ENCODE measurements at regions of chr1 and their contacts with region 1.

Region 1: DNA sequence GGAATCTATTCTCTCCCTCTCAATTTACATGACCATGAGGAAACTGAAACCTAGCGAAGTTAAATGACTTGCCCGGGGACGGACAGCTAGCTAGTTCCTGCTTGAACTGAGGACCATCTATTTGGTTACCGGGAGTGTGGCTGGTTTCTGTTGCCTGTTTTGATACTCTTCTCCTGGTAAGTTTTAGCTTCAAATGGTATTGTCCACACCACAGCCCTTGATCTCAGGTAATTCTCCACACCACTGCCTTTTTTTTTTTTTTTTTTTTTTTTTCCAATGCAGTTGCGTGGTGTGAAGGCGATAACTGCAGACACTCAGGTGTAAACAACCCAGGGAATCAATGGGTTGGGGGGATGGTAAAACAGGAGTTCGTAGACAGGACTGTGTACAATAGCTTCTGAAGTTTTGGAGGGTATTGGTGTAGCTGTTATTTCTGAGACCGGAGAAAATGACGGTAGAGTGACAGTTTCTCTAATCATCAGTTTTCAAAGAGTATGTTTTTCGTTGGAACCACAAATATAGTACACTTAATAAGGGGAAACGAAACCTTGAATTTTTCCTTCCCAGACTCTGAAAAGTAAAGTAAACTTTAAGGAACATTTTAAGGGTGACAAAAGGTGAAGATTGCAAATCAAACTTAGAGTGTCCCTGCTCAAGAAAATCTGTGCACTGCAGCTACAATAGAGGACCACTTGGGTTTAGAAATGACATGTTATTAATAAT is 125.3 kb upstream of the CACYBP start:
- DNase-seq: peak; percentile 30 to 50
- H3K4me3 ChIP-seq: peak overlapping the region; percentile 43
- H3K27ac ChIP-seq: peak overlapping the region; percentile 83
- H3K4me1 ChIP-seq: peaks cover 60% of the 10 kb centered on the region
- H3K27me3 ChIP-seq: no peaks in the 10 kb centered on the region
- CTCF ChIP-seq: no peak

Region 2: GRCh38 chr1:174753131-174753530 is 121.4 kb before region 1 on chr1:
- CTCF ChIA-PET with region 1: no interaction called
- POLR2A ChIA-PET with region 1: no interaction called
- intact Hi-C with region 1: no loop called
- DNase-seq: no peak
- H3K4me3 ChIP-seq: no peak overlapping the region
- H3K27ac ChIP-seq: no peak overlapping the region
- H3K4me1 ChIP-seq: no peaks in the 10 kb centered on the region
- H3K27me3 ChIP-seq: no peaks in the 10 kb centered on the region
- CTCF ChIP-seq: no peak

Region 3: DNA sequence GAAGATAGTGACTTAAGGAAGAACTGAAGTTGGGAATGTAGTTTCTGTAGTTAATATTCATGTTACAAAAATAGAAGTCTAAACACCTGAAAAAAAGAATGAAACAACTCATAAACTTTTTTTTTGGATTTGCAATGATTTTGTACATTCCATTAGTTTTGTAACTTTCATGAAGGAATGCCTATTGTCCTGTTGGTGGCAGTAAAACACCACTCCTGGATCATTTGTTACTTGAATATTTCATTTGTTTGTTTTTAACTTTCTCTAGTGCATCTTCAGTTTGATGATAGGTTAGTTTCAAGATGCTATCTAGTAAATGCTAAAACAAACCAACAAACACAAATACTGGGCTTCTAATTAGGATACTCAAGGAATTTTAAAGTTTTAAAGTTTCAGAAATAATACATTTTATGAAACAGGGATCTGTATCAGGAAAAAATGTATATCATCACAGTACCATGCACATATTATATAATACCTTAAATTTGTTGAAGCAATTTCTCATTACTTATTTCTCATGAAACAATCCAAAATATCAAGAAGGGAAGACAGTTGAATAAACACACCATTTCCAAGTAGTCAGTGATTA is 104.4 kb before region 1 on chr1:
- CTCF ChIA-PET with region 1: no interaction called
- POLR2A ChIA-PET with region 1: no interaction called
- intact Hi-C with region 1: loop called (anchors 5 kb)
- DNase-seq: peak in 1 of 2 experiments; percentile 66
- H3K4me3 ChIP-seq: no peak overlapping the region
- H3K27ac ChIP-seq: no peak overlapping the region
- H3K4me1 ChIP-seq: no peaks in the 10 kb centered on the region
- H3K27me3 ChIP-seq: no peaks in the 10 kb centered on the region
- CTCF ChIP-seq: peak; percentile 90

Region 4: GRCh38 chr1:174800216-174800851 is 74.2 kb before region 1 on chr1:
- CTCF ChIA-PET with region 1: interaction called, 3 read pairs
- POLR2A ChIA-PET with region 1: interaction called, 13 read pairs
- intact Hi-C with region 1: loop called (anchors 1 kb)
- DNase-seq: no peak
- H3K4me3 ChIP-seq: peak overlapping the region; percentile 52; the same call in 1 of the 2 replicates
- H3K27ac ChIP-seq: peak overlapping the region; percentile 72; the same call in 1 of the 2 replicates
- H3K4me1 ChIP-seq: peaks cover 28% of the 10 kb centered on the region
- H3K27me3 ChIP-seq: no peaks in the 10 kb centered on the region
- CTCF ChIP-seq: no peak

Region 5: DNA sequence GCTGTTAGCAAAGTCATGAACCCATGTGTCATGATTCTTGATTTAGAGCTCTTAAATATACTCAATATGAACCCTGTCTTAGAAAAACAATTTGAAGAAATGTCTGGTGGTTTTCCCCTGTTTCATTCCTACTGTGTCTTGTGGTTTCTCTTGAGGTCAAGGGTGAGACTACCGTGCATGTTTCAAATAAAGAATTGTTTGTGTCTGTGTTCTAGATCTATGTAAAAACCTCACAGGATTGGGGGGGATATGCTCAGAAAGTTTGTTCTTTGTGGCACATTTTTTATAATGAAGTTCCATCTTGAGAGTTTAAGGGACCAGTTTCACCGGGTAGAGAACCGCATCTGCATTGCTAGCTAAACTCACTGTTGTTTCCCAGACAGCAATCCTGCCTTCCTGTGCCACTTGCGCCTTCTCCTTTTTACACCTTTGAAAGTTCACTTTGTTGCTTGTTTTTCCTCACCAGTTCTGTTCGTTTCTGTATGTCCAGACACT is 94.3 kb after region 1 on chr1:
- CTCF ChIA-PET with region 1: no interaction called
- POLR2A ChIA-PET with region 1: interaction called, 3 read pairs
- intact Hi-C with region 1: loop called (anchors 2 kb)
- DNase-seq: peak in 1 of 2 experiments; percentile 85
- H3K4me3 ChIP-seq: no peak overlapping the region
- H3K27ac ChIP-seq: peak overlapping the region; percentile 58
- H3K4me1 ChIP-seq: peaks cover 74% of the 10 kb centered on the region
- H3K27me3 ChIP-seq: no peaks in the 10 kb centered on the region
- CTCF ChIP-seq: no peak

Region 6: DNA sequence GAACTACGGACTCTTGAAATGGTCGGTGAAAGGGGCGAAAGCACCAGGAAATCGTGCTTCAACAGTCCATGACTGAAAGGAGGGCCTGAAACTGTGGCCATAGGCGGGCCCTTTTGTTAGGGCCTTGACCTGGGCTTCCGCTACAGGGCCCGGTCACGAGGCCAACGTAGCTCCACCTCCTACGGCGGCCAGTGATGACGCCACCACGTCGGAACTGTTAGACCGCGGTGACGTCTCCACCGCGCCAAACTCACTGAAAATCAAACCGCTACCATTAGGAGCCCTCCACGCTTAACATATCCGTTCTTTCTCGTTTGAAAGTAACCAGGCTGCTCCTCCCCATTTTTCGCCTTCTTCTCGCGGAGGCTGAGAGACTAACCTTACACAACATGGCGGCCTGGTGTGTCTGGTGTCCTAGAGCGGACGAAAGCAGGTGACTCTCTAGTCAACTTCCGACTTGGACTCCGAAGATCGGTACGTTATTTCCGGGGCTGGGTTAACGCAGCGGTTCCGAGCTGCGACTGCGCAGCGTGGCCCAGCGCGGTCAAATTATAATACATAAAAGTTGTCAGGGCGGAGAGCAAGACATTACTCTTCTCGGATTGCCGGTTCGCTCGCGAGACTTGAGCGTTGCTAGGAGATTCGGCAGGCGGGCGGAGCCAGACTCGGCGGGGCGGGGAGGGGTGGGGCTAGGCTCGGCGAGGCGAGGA is 124.9 kb after region 1 on chr1:
- CTCF ChIA-PET with region 1: no interaction called
- POLR2A ChIA-PET with region 1: interaction called, 24 read pairs
- intact Hi-C with region 1: loop called (anchors 1 kb)
- DNase-seq: peak; percentile 94 to 95
- H3K4me3 ChIP-seq: peak overlapping the region; percentile 94
- H3K27ac ChIP-seq: peak overlapping the region; percentile 97
- H3K4me1 ChIP-seq: peaks cover 41% of the 10 kb centered on the region
- H3K27me3 ChIP-seq: no peaks in the 10 kb centered on the region
- CTCF ChIP-seq: no peak

Region 7: DNA sequence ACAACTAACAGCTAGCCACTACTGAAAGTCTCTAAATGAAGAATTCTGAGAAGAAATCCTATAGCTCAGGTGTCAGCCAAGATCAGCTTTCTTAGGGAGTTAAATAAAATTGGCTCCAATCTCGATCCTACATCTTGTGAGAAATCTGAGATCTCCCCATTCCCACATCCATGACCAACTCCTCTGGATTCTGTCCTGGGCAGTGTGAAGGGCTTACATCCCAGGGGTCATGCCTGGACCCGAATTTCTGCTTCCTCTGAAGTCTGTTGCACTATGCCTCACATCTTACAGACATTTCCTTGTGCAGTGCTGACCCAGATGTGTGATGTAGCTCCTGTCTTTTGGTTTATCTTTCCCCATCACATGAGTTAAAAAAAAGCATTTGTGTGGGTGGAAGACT is 188.4 kb after region 1 on chr1:
- CTCF ChIA-PET with region 1: no interaction called
- POLR2A ChIA-PET with region 1: no interaction called
- intact Hi-C with region 1: no loop called
- DNase-seq: no peak
- H3K4me3 ChIP-seq: no peak overlapping the region
- H3K27ac ChIP-seq: no peak overlapping the region
- H3K4me1 ChIP-seq: no peaks in the 10 kb centered on the region
- H3K27me3 ChIP-seq: no peaks in the 10 kb centered on the region
- CTCF ChIP-seq: no peak

Region 8: GRCh38 chr1:175192630-175193526 is 318.4 kb after region 1 on chr1 and contains the start of gene KIAA0040:
- CTCF ChIA-PET with region 1: no interaction called
- POLR2A ChIA-PET with region 1: no interaction called
- intact Hi-C with region 1: loop called (anchors 10 kb)
- DNase-seq: peak; percentile 83 to 84
- H3K4me3 ChIP-seq: peak within 1 kb of the TSS; percentile 98
- H3K27ac ChIP-seq: peak within 1 kb of the TSS; percentile 77
- H3K4me1 ChIP-seq: peaks cover 34% of the 10 kb centered on the region
- H3K27me3 ChIP-seq: no peaks in the 10 kb centered on the region
- CTCF ChIP-seq: no peak; the same call in 1 of the 2 replicates
- total RNA-seq, gene KIAA0040: 8.8 and 9.5 TPM in 2 replicates

Measured in PC-9 (cell line).